ENCODE measurements at regions of chr7 and their contacts with region 1.

Region 1: DNA sequence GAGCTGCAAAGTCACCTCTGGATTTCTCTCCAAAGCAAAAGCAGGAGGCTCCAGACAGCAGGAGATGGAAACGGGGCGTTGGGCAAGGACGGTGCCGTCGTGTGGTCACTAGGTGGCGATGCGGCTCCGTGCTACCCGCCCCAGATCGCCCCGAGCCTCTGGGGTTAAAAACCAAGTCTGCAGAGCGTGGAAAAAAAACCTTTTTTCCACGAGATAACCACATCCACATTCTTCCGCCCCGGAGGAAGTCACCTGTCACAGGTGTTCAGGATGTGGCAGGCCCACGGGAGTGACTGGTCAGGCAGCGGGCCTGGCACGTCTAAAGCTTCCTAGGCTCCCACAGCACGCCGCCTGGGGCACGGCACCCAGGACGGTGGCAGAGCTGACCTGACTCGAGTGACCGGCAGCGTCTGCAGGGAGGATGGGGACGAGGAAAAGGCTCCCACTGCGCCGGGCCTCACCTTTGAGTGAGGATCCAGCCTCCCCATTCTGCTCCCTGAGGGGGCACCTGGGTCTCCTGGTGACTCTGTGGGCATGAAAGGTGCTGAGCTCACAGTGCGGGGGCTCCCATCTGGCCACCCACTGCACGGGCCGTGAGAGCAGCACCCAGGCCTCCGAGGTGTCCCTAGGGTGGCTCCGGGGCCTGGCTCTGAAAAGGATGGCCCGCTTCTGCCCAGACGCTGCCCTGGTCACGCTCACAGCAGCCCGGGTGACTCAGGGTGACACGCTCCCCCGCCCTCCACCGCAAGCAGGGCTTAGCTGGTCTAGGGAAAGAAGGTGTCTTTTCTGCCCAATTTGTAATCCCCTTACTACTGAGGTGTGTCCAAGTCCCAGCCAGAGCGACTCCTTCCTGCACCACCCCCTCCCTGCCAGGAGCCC is 71.3 kb upstream of the TNRC18 start:
- DNase-seq: peak; percentile 85
- H3K27ac ChIP-seq: peak overlapping the region; percentile 87
- CTCF ChIP-seq: peak; percentile 98

Region 2: DNA sequence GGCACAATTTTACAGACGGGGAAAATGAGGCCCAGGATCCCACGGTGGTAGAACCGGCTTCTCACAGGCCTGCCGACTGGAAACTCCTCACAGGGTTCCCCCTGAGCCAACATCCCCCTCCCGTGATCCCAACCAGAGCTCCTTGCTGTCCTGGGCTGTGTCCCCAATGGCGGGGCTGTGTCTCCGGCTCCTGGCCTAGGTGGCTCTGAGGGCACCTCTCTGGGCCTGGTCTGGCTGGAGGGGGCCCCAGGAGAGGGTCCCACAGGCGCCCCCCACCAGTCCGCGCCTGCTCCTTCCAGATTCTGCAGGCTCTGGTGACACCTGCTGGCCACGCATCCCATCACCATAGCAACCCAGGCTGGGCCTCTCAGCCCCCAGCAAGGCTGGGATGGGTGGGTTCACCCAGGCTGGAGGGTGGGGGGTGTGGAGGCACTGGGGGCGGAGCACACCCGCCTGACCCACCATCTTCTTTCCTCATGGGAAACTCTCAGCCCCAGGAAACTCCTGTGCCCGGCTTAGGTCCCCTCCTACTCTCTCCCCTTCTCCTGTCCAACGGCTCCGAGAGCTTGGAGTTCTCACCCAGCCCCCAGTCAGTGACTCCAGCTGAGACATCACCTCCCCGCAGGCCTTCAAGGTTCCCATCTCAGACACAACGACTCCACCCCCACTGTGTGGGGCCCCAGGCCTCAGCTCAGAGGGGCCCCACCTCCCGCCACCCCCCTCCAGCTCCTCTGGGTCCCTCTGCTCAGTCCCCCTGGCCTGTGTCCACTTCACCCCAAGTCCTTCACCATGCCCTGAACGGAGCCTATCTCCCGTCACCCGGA is 44.2 kb before region 1 on chr7:
- CTCF ChIA-PET with region 1: no interaction called
- POLR2A ChIA-PET with region 1: no interaction called
- DNase-seq: peak; percentile 36
- H3K27ac ChIP-seq: peak overlapping the region; percentile 50
- CTCF ChIP-seq: peak; percentile 71

Region 3: GRCh38 chr7:5514440-5515035 is 19.6 kb after region 1 on chr7:
- CTCF ChIA-PET with region 1: interaction called, 4 read pairs
- POLR2A ChIA-PET with region 1: interaction called, 16 read pairs
- DNase-seq: no peak
- H3K27ac ChIP-seq: peak overlapping the region; percentile 99
- CTCF ChIP-seq: no peak

Region 4: DNA sequence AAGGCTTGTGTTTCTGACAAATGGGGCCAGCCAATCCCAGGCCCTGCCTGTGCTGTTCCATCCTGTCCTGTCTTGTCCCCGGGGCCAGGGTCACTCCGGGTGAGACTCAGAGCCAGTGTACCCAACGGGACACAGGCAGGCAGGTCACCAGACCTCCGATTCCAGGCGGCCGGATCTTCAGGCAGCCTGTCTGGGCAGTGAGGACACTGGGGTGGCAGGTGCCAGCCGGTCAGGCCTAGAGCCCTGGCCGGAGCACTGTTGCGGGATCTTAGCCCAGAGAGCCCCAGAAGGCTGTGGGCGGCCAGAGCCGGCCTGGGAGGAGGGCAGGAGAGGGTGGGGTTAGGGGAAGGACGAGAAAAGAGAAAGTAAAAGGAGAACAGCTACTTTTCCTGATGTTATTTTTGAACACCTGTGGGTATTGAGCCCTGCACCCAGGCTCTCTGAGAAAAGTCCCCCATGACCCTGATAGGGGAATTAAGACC is 63.0 kb after region 1 on chr7:
- CTCF ChIA-PET with region 1: interaction called, 47 read pairs
- POLR2A ChIA-PET with region 1: no interaction called
- DNase-seq: peak; percentile 65
- H3K27ac ChIP-seq: peak overlapping the region; percentile 100
- CTCF ChIP-seq: no peak

Region 5: DNA sequence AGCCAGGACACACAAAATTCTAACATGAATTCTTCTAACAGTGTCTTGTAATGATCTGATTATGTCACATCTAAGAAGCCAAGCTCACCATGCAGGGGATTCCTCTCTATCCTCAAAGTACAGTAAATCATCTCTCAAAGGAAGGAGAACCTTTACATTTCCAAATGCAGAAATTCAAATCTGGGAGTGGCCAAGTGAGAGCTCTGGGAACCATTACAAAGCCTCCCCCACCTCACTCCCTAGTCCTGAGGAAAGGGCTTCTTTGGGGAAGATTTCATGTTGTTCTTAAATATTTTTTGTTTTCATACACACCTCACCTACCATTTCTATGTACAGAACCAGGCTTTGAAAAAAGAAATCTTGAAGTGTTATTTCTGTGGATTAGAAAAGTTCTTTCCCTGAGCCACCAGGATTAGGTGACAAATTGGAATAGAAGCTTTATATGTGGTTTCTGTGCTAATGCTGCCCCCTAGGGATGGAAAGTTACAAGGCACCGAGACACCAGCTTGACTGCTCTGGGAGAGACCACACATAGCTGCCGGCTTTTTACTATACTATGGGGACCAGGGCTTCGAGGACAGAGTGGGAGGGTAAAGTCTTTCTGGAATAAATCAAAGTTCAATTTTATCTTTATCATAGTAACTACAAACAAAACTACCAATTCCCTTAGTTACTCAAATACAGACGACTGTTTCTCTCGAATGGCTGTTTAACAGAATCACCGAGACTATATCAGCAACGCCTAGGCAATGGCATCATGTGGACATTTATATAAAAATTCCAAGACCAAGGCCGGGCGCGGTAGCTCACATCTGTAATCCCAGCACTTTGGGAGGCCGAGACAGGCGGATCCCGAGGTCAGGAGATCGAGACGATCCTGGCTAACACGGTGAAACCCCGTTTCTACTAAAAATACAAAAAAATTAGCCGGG is 170.4 kb after region 1 on chr7:
- CTCF ChIA-PET with region 1: interaction called, 32 read pairs
- POLR2A ChIA-PET with region 1: no interaction called
- DNase-seq: peak; percentile 73
- H3K27ac ChIP-seq: peak overlapping the region; percentile 62
- CTCF ChIP-seq: peak; percentile 93

Region 6: GRCh38 chr7:5677538-5678294 is 182.8 kb after region 1 on chr7:
- CTCF ChIA-PET with region 1: interaction called, 12 read pairs
- POLR2A ChIA-PET with region 1: no interaction called
- DNase-seq: peak; percentile 73
- H3K27ac ChIP-seq: peak overlapping the region; percentile 35
- CTCF ChIP-seq: peak; percentile 93

Region 7: DNA sequence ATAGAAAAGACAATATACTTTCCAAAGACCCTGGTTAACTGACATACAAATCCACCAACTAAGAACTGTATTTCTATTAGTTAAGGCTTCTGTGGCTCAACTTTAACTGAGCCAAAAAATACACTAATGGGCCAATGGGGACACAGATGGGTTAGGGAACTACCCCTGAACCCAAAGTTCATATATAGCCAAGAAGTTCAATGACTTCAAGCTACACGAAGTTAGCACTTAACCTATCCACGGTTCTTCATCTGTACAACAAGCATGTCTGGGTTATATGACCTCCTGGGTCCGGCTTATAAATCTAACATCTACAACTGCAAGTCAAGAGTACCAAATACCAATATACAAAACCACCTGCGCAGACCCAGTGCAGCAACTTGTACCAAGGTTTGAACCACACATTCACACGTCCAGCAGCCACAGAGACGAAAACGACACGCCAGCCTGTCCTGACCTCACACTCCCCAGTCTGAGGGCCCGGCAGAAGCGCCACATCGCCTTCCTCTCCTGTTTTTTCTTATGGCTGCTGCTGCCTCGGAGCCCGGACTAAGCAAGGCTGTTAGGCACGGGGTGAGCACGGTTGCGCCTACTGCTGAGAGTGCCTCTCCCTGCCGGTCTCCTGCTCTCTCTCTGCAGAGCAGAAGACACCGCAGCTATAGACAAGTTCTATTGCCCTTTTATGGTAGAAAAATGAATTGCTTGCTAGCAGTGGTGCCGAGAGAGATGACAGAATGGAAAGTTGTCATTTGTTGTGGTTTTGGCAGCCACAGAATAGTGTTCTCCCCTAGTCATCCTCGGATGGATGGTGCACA is 200.2 kb after region 1 on chr7:
- CTCF ChIA-PET with region 1: interaction called, 10 read pairs
- POLR2A ChIA-PET with region 1: no interaction called
- DNase-seq: no peak
- H3K27ac ChIP-seq: no peak overlapping the region
- CTCF ChIP-seq: no peak